Panc1 (cell line): ENCODE measurements at regions of chr15 and their contacts with region 1.

Region 1: DNA sequence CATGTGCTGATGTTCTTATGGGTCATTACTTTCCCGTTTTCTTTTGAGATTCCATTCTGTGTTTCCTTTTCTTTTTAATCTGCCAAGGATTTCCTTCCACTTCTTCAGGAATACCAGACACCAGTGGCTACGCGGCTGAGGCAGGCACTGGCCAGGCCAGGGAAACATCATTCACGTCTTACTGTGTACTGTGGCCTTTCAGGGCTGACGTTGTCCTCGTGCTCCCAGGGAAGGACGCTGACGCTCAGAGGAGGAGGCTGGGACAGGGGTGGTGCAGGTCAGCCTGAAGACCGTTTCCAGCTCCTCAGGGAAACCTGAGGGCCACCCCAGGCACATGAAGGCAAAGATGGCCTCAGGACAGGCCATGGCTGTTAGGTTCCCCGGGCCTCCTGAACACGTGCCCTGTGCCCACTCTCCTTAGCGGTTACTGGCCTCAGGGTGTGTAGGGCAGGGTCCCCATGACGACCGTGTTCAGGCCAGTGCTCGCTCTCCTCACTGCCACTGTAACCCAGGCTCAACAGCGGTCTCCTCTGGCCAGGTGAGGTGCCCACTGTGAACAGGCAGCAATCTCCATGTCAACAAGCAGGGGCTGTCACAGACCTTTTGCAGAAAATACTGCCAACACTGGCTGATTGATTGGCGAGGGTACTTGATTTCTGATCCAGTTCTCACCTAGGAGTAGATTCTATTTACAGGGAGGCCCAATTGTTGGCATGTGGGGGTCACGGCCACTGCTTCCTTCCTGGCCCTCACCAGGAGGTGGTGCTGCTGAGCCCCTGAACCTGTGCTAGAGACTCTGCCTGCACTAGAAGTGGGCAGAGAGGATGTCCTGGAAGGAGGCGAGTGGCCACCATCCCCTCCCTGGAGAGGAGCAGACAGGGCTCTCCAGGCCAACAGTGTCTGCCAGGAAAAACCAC is 169.5 kb downstream of the ATP10A start:
- DNase-seq: no peak
- ATAC-seq: no peak
- H3K4me3 ChIP-seq: no peak overlapping the region
- H3K27ac ChIP-seq: no peak overlapping the region
- H3K4me1 ChIP-seq: no peaks in the 10 kb centered on the region
- H3K27me3 ChIP-seq: no peaks in the 10 kb centered on the region
- CTCF ChIP-seq: peak; percentile 75

Region 2: GRCh38 chr15:26082221-26083109 is 388.9 kb after region 1 on chr15:
- CTCF ChIA-PET with region 1: no interaction called
- POLR2A ChIA-PET with region 1: no interaction called
- in situ Hi-C with region 1: no loop called
- intact Hi-C with region 1: loop called (anchors 5 kb)
- DNase-seq: peak; percentile 94
- ATAC-seq: peak; percentile 99
- H3K4me3 ChIP-seq: peak overlapping the region; percentile 81 to 88
- H3K27ac ChIP-seq: peak overlapping the region; percentile 73
- H3K4me1 ChIP-seq: peaks cover 6% of the 10 kb centered on the region; the same call in 1 of the 2 replicates
- H3K27me3 ChIP-seq: no peaks in the 10 kb centered on the region
- CTCF ChIP-seq: no peak